HEK293T (cell line): ENCODE measurements at regions of chr19 and their contacts with region 1.

Region 1: DNA sequence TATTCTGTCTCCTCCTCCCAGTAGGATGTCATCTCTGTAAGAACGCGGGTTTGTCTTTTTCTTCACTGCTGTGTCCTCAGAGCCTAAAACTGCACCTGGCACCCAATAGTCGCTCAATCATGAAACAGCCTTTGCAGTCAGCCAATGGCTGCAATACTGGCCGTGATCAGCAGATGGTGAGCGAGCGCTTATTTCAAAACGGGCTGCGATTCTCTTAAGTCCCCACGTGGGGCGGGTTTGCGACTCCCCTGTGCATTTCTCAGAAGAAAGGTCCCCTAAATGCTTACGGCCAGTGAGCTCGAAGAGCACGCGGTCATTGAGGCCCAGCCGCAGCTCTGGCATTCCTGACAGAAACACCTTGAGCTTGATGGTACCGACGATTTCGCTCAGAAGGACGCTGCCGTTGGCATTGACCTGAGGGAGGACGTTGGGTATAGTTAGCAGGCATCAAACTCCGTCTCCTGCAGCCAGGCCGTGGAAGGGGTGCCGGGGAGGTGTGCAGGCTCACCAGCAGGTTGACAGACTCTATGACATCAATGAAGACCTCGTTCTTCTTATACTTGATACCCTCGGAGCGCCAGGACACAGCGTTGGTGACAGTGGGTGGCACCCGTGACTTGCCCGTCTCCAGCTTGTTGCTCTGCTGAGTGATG is 6.0 kb downstream of the AP1M2 start:
- DNase-seq: peak; percentile 82

Region 2: DNA sequence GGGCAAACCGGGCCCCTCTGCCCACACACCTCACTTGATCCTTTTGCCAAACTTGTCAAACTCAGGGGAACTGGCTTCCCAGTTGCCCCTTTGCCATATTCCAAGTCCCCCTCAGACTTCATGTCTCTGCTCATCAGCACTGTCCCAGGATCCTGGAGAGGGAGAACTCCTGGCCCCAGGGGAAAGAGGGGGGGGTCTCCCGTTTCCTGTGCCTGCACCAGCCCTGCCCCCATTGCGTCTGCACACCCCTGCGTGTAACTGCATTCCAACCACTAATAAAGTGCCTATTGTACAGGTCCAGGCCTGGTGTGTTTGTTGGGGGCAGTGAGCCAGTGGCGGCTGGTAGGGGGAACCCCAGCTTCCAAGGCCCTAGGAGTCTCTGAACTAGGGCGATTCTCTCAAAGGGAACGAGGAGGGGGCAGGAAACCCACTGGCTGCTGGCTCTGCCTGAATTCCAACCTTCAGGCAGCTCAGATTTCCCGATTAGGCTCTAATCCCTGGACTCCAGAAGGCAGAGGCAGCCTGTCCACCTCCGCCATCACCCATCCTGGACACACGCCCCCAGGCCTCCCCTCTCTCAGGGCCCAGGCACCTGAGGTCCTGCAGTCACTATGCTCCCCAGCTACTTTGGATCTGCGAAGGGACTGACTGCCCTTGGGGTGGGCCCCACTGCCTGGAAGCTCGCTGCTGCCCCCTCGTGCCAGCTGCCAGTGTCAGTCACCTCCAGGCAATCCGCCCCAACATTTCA is 63.3 kb after region 1 on chr19:
- CTCF ChIA-PET with region 1: interaction called, 149 read pairs
- POLR2A ChIA-PET with region 1: interaction called, 11 read pairs
- DNase-seq: peak; percentile 91

Region 3: DNA sequence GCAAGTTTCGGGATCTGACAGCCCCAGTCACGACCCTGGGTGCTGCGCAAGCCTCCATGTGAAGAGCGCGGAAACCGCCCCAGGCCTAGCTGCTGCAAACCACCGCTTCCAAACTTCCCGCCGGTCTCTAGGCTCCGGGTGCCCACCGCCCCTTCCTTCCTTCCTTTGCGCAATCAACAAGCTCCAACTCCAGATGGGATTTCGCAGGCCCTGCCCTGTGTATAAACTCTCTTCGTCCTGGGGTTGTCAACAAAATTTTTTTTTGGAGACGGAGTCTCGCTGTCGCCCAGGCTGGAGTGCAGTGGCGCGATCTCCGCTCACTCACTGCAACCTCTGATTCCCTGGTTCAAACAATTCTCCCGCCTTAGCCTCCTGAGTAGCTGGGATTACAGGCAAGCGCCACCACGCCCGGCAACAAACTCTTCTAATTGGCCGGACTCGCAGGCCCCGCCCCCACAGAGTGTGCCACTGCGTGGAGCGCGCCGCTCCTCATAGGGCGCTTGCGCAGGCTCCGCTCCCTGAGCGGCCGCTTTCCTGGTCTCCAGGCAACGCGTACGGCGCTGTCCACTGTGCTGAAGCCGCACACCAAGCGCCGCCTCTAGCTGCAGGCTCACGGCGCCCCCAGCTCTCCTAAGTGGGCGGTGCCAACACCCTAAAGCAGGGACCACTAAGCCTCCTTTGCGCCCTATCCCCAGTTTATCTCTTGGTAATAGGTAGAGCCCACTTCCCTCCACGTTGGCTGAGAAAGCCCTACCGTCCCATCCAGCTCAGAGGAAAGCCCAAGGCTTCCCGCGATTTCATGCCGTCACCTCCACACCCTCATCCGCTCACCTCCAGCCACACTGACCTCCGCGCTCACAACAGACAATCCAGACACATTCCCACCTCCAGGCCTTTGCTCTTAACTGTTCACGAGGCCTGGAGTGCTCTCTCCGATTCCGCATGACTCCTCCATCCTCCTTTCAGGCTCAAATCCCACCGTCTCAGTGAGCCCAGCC is 114.6 kb after region 1 on chr19:
- CTCF ChIA-PET with region 1: interaction called, 59 read pairs
- POLR2A ChIA-PET with region 1: interaction called, 7 read pairs
- DNase-seq: peak; percentile 95